ENCODE measurements at regions of chr19 and their contacts with region 1.

Region 1: GRCh38 chr19:55418185-55418584 is 10.6 kb upstream of the UBE2S start:
- DNase-seq: peak; percentile 70 to 82
- H3K4me3 ChIP-seq: no peak overlapping the region
- H3K4me1 ChIP-seq: no peaks in the 10 kb centered on the region
- H3K27me3 ChIP-seq: no peaks in the 10 kb centered on the region

Region 2: DNA sequence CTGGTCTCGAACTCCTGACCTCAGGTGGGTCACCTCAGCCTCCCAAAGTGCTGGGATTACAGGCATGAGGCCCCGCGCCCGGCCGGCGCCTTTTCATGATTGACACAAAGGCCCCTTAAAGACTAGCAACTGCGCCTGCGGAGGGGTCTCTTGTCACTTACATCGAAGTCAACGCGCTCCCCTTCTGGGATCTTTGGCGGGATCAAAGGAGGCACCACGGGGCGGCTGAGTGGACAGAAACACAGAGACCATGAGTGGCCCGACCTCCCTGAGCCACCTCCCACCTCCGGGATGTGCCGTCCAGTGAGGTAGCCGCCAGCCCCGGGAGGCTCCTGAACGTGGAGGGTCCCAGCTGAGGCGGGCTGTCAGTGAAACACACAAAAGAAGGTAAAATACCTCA is 276.5 kb before region 1 on chr19:
- in situ Hi-C with region 1: loop called (anchors 5 kb)
- DNase-seq: no peak
- H3K4me3 ChIP-seq: no peak overlapping the region
- H3K4me1 ChIP-seq: no peaks in the 10 kb centered on the region; the same call in none of the 2 replicates
- H3K27me3 ChIP-seq: no peaks in the 10 kb centered on the region

Region 3: GRCh38 chr19:55216461-55217198 is 201.6 kb before region 1 on chr19:
- in situ Hi-C with region 1: loop called (anchors 10 kb)
- DNase-seq: peak; percentile 75 to 94
- H3K4me3 ChIP-seq: peak overlapping the region; percentile 50
- H3K4me1 ChIP-seq: peaks cover 9% of the 10 kb centered on the region
- H3K27me3 ChIP-seq: no peaks in the 10 kb centered on the region

Region 4: DNA sequence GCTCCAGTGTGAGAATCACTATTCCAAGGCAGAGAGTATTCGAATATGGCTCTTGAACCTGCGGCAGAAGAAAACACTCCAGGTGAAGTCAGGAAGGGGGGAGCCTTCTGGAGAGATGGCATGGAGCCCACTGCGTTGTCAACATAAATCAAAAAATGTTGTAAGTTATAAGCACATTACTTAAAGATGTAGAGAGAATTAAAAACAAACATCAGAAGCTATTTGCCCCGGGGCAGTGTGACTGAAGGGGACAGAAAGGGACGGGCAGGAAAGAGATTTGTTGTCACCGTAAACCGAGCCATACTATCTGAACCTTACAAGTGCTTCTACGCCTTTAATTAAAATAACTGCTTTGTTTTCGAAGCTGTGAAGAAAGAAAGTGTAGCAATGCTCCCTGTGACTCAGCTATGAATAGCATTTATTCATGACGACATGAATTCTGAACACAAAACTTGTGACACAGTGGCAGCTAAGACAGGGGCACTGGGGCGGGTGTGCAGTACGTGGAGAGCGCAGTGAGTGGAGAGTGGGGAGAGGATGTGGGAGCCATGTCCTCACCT is 672.8 kb after region 1 on chr19:
- in situ Hi-C with region 1: no loop called
- DNase-seq: no peak
- H3K4me3 ChIP-seq: no peak overlapping the region
- H3K4me1 ChIP-seq: no peaks in the 10 kb centered on the region
- H3K27me3 ChIP-seq: no peaks in the 10 kb centered on the region

Measured in HAP-1 (cell line).